Common myeloid progenitor, CD34-positive (primary cell): ENCODE measurements at regions of chr1 and their contacts with region 1.

Region 1: DNA sequence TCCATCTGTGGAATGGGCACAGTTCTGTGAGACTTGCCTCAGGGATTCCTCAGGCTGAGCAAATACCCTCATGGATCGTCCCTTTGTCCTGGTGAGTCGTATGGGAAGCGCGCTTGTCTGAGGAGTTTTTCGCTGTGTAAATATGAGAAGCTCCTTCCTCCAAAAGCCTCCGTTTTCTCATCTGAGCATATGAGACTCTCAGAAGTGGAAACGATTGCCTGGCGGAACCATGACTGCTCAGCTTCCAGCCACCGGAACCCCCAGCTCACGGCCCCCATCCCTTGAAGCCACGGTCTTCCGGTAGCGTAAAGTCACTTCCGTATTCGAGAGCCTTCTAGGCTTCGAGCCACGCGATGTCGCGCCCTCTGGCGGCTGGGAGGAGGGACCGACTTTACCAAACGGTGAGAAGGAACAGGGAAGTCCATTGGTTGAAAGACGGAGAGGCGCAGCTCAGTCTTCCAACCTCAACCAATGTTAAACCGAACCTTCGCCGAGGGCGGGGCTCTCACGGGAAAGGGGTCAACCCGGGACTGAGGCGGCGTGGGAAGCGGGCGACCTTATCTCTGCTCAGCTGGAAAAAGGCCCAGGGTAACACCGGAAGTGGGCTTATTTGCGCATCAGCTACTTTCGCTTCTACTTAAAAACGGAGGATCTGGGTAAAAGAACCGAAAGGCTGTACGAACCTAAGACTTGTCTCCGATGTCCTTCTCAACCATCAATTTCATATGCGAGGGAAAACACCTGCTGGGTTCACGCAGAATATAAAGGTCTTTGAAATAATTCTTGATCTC is 46.2 kb downstream of the AZIN2 start:
- DNase-seq: peak; percentile 100
- H3K4me3 ChIP-seq: peak overlapping the region; percentile 57 to 98 (median 87)
- H3K27ac ChIP-seq: peak overlapping the region; percentile 78 to 90
- H3K4me1 ChIP-seq: peaks cover 10 to 28% (median 16%) of the 10 kb centered on the region in 4 experiments
- H3K27me3 ChIP-seq: no peaks in the 10 kb centered on the region

Region 2: GRCh38 chr1:32650157-32650751 is 476.9 kb before region 1 on chr1 and contains the start of gene ZBTB8OS:
- CTCF ChIA-PET with region 1: no interaction called
- POLR2A ChIA-PET with region 1: no interaction called
- DNase-seq: peak; percentile 96 to 98 (median 97)
- H3K4me3 ChIP-seq: peak within 1 kb of the TSS; percentile 35 to 95 (median 79)
- H3K27ac ChIP-seq: peak within 1 kb of the TSS; percentile 96 to 98
- H3K4me1 ChIP-seq: peaks cover 10 to 41% (median 32%) of the 10 kb centered on the region in 4 experiments
- H3K27me3 ChIP-seq: no peaks in the 10 kb centered on the region

Region 3: GRCh38 chr1:33050221-33051076 is 76.7 kb before region 1 on chr1:
- CTCF ChIA-PET with region 1: no interaction called
- POLR2A ChIA-PET with region 1: no interaction called
- DNase-seq: peak in 2 of 3 donors; percentile 44 to 50
- H3K4me3 ChIP-seq: peak overlapping the region in 1 of 7 experiments; percentile 14
- H3K27ac ChIP-seq: no peak overlapping the region
- H3K4me1 ChIP-seq: peaks cover 13 to 28% (median 19%) of the 10 kb centered on the region in 4 experiments
- H3K27me3 ChIP-seq: no peaks in the 10 kb centered on the region

Region 4: GRCh38 chr1:33111970-33112369 is 15.2 kb before region 1 on chr1:
- CTCF ChIA-PET with region 1: interaction called, 13 read pairs
- POLR2A ChIA-PET with region 1: no interaction called
- DNase-seq: peak; percentile 60 to 78 (median 74)
- H3K4me3 ChIP-seq: no peak overlapping the region
- H3K27ac ChIP-seq: no peak overlapping the region
- H3K4me1 ChIP-seq: no peaks in the 10 kb centered on the region
- H3K27me3 ChIP-seq: no peaks in the 10 kb centered on the region

Region 5: DNA sequence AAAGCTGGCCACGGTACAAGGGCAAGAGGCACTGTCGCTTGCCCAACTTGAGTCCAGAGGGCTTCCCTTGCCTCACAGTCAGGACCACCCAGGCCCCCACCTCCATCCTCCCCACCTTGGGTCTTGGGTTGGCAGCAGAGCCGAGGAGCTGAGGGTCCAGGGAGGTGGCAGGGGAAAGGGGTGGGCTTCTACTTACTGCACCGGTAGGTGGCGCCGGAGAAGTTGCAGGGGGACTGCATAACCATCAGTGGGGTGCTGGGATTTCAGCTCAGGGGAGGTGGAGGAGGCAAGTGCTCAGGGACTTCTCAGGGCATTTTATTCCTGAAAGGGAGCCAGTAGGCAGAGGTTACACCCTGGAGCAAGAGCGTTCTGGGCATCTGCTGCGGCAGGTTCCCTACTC is 10.6 kb after region 1 on chr1:
- CTCF ChIA-PET with region 1: interaction called, 12 read pairs
- POLR2A ChIA-PET with region 1: no interaction called
- DNase-seq: peak; percentile 46 to 70 (median 64)
- H3K4me3 ChIP-seq: no peak overlapping the region
- H3K27ac ChIP-seq: no peak overlapping the region
- H3K4me1 ChIP-seq: peaks cover 2 to 27% (median 14%) of the 10 kb centered on the region in 4 experiments
- H3K27me3 ChIP-seq: no peaks in the 10 kb centered on the region

Region 6: DNA sequence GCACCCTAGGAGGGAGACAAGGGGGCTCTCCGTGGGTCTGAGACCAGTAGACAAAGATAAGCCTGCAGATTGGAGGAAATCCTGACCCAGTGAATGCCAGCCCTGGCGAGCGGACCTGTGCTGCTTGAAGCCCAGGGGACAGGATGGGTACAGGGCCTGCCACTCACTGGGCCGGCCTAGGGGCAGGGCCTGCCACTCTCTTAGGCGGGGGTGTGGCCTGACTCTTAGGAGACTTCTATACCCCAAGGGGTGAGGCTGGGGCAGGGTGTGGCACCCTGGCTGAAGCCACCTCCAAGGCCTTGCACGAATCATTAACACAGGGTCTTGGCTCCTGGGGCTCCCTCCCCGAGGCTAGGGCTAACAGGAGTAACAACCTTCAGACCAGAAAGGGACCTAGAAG is 23.9 kb after region 1 on chr1:
- CTCF ChIA-PET with region 1: no interaction called
- POLR2A ChIA-PET with region 1: no interaction called
- DNase-seq: no peak
- H3K4me3 ChIP-seq: no peak overlapping the region
- H3K27ac ChIP-seq: no peak overlapping the region
- H3K4me1 ChIP-seq: peaks cover 0 to 8% (median 0%) of the 10 kb centered on the region in 4 experiments
- H3K27me3 ChIP-seq: no peaks in the 10 kb centered on the region